HepG2 (cell line): ENCODE measurements at regions of chr1 and their contacts with region 1.

Region 1: DNA sequence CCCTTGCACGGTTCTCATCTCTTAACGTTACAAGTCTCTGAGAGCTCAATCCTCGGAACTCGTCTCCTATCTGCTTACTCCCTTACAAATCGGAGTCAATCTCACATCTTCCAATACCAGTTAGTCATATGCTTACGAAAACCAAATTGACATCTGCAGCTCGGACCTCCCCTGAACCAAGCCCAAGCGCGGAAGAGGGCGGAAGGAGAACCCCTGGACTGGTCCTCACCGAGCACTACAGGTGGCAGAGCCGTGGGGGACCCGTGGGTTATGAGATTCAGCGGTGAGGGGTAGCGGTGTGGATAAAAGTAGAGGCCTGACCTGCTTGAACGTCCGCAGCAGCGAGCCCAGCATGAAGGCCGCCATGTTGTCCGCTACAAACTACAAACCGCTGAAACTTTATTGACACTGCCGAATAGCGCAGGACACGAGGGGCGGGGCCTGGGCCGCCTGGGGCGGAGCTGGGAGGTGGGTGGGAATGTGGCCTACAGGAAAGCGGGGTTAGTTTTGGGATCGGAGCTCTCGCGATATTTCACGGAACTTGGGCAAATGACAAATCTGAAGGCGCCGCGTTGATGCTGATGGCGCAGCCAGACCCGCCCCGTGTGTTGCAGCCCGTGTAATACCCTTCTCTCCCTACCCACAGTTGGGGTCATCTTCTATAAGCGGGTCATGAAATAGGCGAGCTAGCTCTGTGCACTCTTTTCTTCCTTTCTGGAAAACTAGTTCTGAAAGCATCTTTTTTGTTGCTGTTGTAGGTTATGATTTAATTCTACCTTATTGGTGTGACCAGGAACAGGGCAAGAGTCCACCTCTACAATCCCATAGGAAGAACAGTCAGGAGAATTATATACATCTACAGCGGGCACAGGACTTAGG is at the start of gene MRPS14:
- DNase-seq: peak; percentile 96
- ATAC-seq: peak; percentile 97
- H3K4me3 ChIP-seq: peak within 1 kb of the TSS; percentile 94 to 99 (median 99)
- H3K27ac ChIP-seq: peak within 1 kb of the TSS; percentile 90
- H3K4me1 ChIP-seq: peaks cover 19% of the 10 kb centered on the region
- H3K27me3 ChIP-seq: no peaks in the 10 kb centered on the region; a peak in 1 of 5 replicates
- CTCF ChIP-seq: no peak
- EP300 ChIP-seq: peak in 1 of 2 experiments; percentile 49; a peak in 2 of 4 replicates
- POLR2A ChIP-seq: peak; percentile 88 to 92
- RAD21 ChIP-seq: no peak
- total RNA-seq, gene MRPS14: 43.2 and 52.7 TPM in 2 replicates

Region 2: DNA sequence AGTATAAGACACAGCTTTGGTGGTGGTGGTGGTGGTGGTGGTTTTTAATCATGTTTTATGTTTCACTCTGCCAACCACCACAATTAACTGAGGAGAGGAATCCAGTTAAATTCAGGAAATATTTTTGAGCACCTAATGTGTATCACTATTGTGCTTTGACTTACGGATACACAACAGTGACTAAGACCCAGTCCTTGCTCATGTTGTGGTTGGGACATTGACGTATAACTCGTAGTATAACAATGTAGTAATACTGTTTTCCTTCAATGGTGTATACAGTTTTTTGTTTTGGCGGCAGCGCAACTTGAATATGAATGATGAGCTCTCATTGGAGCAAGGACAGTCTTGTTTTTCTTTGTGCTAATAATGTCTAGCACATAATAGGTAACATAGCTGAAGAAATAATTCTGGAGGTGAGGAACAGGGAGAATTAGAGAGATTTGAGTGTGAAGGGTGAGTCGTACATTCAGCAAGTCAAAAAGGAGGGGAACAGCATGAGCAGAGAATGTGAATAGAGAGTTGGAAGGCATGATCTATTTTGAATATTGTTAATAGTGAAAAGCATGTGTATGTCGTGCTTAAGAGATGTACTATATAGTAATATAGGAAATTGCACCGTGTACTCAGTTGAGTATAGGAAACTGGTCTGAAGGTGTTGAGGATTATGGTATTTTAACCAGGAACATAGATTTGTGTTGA is 18.0 kb before region 1 on chr1:
- CTCF ChIA-PET with region 1: no interaction called
- POLR2A ChIA-PET with region 1: interaction called, 124 read pairs
- in situ Hi-C with region 1: no loop called
- intact Hi-C with region 1: no loop called
- DNase-seq: no peak
- ATAC-seq: no peak
- H3K4me3 ChIP-seq: no peak overlapping the region
- H3K27ac ChIP-seq: no peak overlapping the region
- H3K4me1 ChIP-seq: peaks cover 29% of the 10 kb centered on the region
- H3K27me3 ChIP-seq: no peaks in the 10 kb centered on the region; a peak in 1 of 5 replicates
- CTCF ChIP-seq: no peak
- EP300 ChIP-seq: no peak
- POLR2A ChIP-seq: no peak
- RAD21 ChIP-seq: no peak

Region 3: GRCh38 chr1:175054736-175055135 is 31.5 kb after region 1 on chr1:
- CTCF ChIA-PET with region 1: no interaction called
- POLR2A ChIA-PET with region 1: no interaction called
- in situ Hi-C with region 1: no loop called
- intact Hi-C with region 1: no loop called
- DNase-seq: no peak
- ATAC-seq: no peak
- H3K4me3 ChIP-seq: no peak overlapping the region
- H3K27ac ChIP-seq: no peak overlapping the region
- H3K4me1 ChIP-seq: no peaks in the 10 kb centered on the region
- H3K27me3 ChIP-seq: no peaks in the 10 kb centered on the region
- CTCF ChIP-seq: no peak
- EP300 ChIP-seq: no peak
- POLR2A ChIP-seq: no peak
- RAD21 ChIP-seq: no peak

Region 4: DNA sequence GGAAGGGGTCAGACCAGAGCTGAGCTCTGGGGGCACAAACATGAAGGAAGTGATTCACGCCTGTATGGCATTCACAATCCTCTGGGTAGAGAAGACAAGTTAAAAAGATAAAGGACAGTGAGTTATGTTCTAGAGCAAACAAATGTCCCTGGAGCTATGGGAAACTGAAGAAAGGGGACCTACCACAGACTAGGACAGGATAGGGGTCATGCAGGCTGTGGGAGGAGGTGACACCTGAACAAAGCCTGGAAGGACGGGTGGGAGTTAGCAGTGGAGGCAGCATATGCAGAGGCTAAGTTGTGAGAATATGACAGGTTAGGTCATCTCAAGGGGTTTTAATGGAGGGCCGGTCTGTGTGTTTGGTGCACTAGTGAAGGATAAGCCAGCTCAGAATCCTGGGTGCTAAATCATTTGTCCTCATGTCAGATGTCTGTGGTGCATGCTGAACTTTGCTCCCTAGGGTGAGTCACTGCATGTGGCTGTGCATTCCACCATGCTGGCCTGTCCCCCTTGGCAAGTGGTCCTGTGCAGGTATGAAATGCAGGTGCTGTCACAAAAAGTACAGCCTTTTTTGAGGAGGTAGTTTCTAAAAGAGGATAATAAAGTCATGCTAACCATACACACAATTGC is 72.8 kb after region 1 on chr1:
- CTCF ChIA-PET with region 1: no interaction called
- POLR2A ChIA-PET with region 1: no interaction called
- in situ Hi-C with region 1: no loop called
- intact Hi-C with region 1: no loop called
- DNase-seq: peak; percentile 74
- ATAC-seq: peak; percentile 97
- H3K4me3 ChIP-seq: no peak overlapping the region
- H3K27ac ChIP-seq: no peak overlapping the region
- H3K4me1 ChIP-seq: peaks cover 13% of the 10 kb centered on the region
- H3K27me3 ChIP-seq: no peaks in the 10 kb centered on the region
- CTCF ChIP-seq: no peak
- EP300 ChIP-seq: no peak
- POLR2A ChIP-seq: no peak
- RAD21 ChIP-seq: no peak

Region 5: GRCh38 chr1:175319418-175320230 is 296.3 kb after region 1 on chr1:
- CTCF ChIA-PET with region 1: no interaction called
- POLR2A ChIA-PET with region 1: interaction called, 5 read pairs
- in situ Hi-C with region 1: loop called (anchors 10 kb)
- intact Hi-C with region 1: no loop called
- DNase-seq: peak; percentile 52
- ATAC-seq: peak; percentile 95
- H3K4me3 ChIP-seq: no peak overlapping the region
- H3K27ac ChIP-seq: no peak overlapping the region
- H3K4me1 ChIP-seq: no peaks in the 10 kb centered on the region
- H3K27me3 ChIP-seq: peaks cover 1 to 7% of the 10 kb centered on the region in 2 experiments; a peak in 2 of 5 replicates
- CTCF ChIP-seq: peak; percentile 89
- EP300 ChIP-seq: no peak
- POLR2A ChIP-seq: no peak
- RAD21 ChIP-seq: peak; percentile 73